ENCODE measurements at regions of chr3 and their contacts with region 1.

Region 1: DNA sequence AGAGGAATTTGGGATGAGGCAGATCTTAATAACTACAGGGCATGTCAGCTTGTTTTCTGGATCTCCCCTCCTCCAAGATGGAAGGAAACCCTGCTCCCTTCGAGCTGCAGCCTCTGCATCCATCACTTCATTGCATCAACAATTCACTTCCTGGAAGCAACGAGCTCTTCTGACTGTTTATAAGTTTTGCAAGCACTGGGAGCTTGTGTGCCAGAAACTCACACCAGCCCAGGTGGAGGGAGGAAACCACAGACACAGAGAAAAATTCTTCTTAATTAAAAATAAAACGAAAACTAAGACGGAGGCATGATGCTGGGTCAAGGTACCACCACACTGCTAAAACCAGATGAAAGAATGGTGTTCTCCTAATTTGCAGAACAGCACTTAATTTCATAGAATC is 10.6 kb downstream of the LRIG1 start:
- DNase-seq: no peak
- ATAC-seq: peak; percentile 75
- H3K4me3 Mint-ChIP-seq: peak overlapping the region; percentile 67
- H3K27ac Mint-ChIP-seq: peak overlapping the region; percentile 87
- H3K4me1 Mint-ChIP-seq: peaks cover 58% of the 10 kb centered on the region
- H3K27me3 Mint-ChIP-seq: peaks cover 4% of the 10 kb centered on the region

Region 2: GRCh38 chr3:66500576-66501482 is 10.6 kb after region 1 on chr3 and contains the start of gene LRIG1:
- POLR2A ChIA-PET with region 1: interaction called, 10 read pairs
- DNase-seq: peak; percentile 97
- ATAC-seq: peak; percentile 99
- H3K4me3 Mint-ChIP-seq: peak within 1 kb of the TSS; percentile 92
- H3K27ac Mint-ChIP-seq: peak within 1 kb of the TSS; percentile 82
- H3K4me1 Mint-ChIP-seq: peaks cover 39% of the 10 kb centered on the region
- H3K27me3 Mint-ChIP-seq: peaks cover 45% of the 10 kb centered on the region
- total RNA-seq, gene LRIG1: 17.9 to 27.0 TPM

Measured in activated naive CD8-positive, alpha-beta T cell treated with anti-CD3 and anti-CD28 coated beads, Interleukin-2, amount 10 ng/mL, durations not matched to agents 7 days and 5 days (primary cell).